PC-9 (cell line): ENCODE measurements at regions of chr1 and their contacts with region 1.

Region 1: GRCh38 chr1:226845624-226846023 is 24.8 kb upstream of the PSEN2 start:
- DNase-seq: no peak
- H3K4me3 ChIP-seq: no peak overlapping the region
- H3K27ac ChIP-seq: no peak overlapping the region
- H3K4me1 ChIP-seq: peaks cover 10% of the 10 kb centered on the region; the same call in 1 of the 2 replicates
- H3K27me3 ChIP-seq: no peaks in the 10 kb centered on the region
- CTCF ChIP-seq: no peak

Region 2: DNA sequence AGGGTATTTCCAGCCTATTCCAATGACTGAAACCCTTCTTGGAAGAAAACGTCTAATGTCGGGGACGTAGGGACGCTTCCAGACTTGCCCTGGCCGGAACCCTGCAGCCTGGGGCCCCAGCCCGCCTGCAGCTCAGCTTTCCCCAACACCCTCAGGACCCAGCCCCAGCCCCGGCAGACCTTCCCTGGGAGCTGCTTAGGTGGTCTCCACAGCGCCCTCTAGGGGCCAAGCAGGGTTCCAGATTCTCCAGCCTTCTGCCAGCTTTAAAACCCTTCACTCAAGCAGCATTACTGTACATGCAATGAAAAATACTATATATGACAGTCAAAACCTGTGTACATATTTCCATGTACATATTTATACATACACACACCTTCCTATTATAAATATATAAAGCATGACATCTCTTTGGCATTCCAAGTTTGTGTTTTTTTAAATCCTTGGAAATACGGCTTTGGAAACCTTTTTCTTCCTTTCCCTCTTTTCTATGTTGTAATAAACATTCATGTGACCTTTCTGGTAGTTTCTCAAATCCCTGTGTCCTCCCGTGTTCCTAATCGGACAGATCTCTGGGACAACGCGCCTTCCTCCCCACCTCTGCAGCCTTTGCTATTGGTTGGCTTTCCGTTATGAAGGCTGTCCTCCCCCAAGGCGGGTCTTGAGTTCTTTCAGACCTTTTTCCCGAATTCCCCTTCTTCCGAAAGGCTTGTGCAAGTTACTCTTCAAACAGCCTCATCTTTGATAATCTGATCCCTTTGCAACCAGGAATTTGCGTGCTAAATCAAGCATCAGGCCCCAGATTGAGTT is 236.7 kb before region 1 on chr1:
- CTCF ChIA-PET with region 1: interaction called, 14 read pairs
- POLR2A ChIA-PET with region 1: no interaction called
- intact Hi-C with region 1: no loop called
- DNase-seq: peak in 1 of 2 experiments; percentile 34
- H3K4me3 ChIP-seq: no peak overlapping the region
- H3K27ac ChIP-seq: no peak overlapping the region
- H3K4me1 ChIP-seq: no peaks in the 10 kb centered on the region
- H3K27me3 ChIP-seq: peaks cover 23% of the 10 kb centered on the region
- CTCF ChIP-seq: peak; percentile 86

Region 3: GRCh38 chr1:226754793-226755533 is 90.7 kb before region 1 on chr1:
- CTCF ChIA-PET with region 1: no interaction called
- POLR2A ChIA-PET with region 1: no interaction called
- intact Hi-C with region 1: no loop called
- DNase-seq: no peak
- H3K4me3 ChIP-seq: no peak overlapping the region
- H3K27ac ChIP-seq: no peak overlapping the region
- H3K4me1 ChIP-seq: no peaks in the 10 kb centered on the region
- H3K27me3 ChIP-seq: no peaks in the 10 kb centered on the region
- CTCF ChIP-seq: no peak

Region 4: DNA sequence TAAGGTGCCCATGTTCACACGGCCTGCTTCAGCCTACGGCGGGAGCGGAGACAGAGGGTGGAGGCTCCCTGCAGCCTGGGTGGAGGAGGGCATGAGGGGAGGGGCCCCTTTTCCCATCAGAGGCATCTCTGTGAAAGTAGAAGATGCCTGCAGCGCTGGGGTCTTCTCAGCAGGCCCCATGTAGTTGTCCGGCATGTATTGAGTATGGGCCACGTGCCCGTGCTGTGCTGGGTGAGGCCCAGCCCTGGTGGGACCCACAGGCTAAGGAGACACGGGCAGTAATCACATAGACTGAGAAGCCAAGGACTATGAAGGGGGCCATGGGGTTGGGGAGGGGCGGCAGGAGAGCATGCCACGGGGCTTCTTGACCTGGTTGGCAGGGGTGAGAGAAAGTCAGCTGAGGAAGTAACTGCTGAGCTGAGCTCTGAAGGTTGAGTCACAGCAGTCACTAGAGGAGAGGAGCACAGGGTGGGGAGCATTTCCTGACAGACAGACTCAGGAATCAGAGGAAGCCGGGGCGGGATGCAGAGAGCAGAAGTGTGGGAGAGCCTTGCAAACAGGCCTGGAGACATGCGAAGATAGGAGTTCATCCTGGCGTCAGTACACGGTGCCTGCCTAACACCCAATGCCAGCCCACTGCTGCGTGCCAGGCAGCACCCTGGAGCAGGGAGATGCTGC is 46.4 kb after region 1 on chr1:
- CTCF ChIA-PET with region 1: no interaction called
- POLR2A ChIA-PET with region 1: no interaction called
- intact Hi-C with region 1: no loop called
- DNase-seq: no peak
- H3K4me3 ChIP-seq: no peak overlapping the region
- H3K27ac ChIP-seq: no peak overlapping the region
- H3K4me1 ChIP-seq: no peaks in the 10 kb centered on the region
- H3K27me3 ChIP-seq: no peaks in the 10 kb centered on the region
- CTCF ChIP-seq: no peak